Spleen (tissue), 13 donors: ENCODE measurements at regions of chr4 and their contacts with region 1.

Region 1: GRCh38 chr4:1746265-1746691 is 25.0 kb downstream of the TACC3 start:
- DNase-seq: peak; percentile 93
- H3K4me3 ChIP-seq: no peak overlapping the region
- H3K27ac ChIP-seq: no peak overlapping the region
- H3K4me1 ChIP-seq: peaks cover 4 to 16% (median 9%) of the 10 kb centered on the region in 6 donors
- H3K27me3 ChIP-seq: peaks cover 0 to 17% (median 0%) of the 10 kb centered on the region in 7 donors
- CTCF ChIP-seq: peak; percentile 67 to 91 (median 83)
- POLR2A ChIP-seq: no peak

Region 2: GRCh38 chr4:1167247-1167949 is 578.9 kb before region 1 on chr4:
- intact Hi-C with region 1: no loop called
- DNase-seq: peak; percentile 96
- H3K4me3 ChIP-seq: peak overlapping the region; percentile 54 to 95 (median 77)
- H3K27ac ChIP-seq: peak overlapping the region; percentile 22 to 92 (median 82)
- H3K4me1 ChIP-seq: peaks cover 11 to 89% (median 52%) of the 10 kb centered on the region in 6 donors
- H3K27me3 ChIP-seq: peaks cover 0 to 38% (median 24%) of the 10 kb centered on the region in 7 donors
- CTCF ChIP-seq: peak; percentile 84 to 97 (median 92)
- POLR2A ChIP-seq: no peak

Region 3: GRCh38 chr4:1809754-1810511 is 63.7 kb after region 1 on chr4:
- intact Hi-C with region 1: loop called (anchors 5 kb)
- DNase-seq: peak; percentile 89
- H3K4me3 ChIP-seq: no peak overlapping the region
- H3K27ac ChIP-seq: no peak overlapping the region
- H3K4me1 ChIP-seq: peaks cover 0 to 4% (median 0%) of the 10 kb centered on the region in 6 donors
- H3K27me3 ChIP-seq: no peaks in the 10 kb centered on the region
- CTCF ChIP-seq: peak; percentile 42 to 90 (median 82)
- POLR2A ChIP-seq: no peak

Region 4: GRCh38 chr4:1899149-1900086 is 153.1 kb after region 1 on chr4:
- intact Hi-C with region 1: loop called (anchors 5 kb)
- DNase-seq: peak; percentile 90
- H3K4me3 ChIP-seq: no peak overlapping the region
- H3K27ac ChIP-seq: no peak overlapping the region
- H3K4me1 ChIP-seq: peaks cover 0 to 15% (median 8%) of the 10 kb centered on the region in 6 donors
- H3K27me3 ChIP-seq: no peaks in the 10 kb centered on the region
- CTCF ChIP-seq: peak; percentile 73 to 92 (median 86)
- POLR2A ChIP-seq: no peak